ENCODE measurements at regions of chr14 and their contacts with region 1.

Region 1: DNA sequence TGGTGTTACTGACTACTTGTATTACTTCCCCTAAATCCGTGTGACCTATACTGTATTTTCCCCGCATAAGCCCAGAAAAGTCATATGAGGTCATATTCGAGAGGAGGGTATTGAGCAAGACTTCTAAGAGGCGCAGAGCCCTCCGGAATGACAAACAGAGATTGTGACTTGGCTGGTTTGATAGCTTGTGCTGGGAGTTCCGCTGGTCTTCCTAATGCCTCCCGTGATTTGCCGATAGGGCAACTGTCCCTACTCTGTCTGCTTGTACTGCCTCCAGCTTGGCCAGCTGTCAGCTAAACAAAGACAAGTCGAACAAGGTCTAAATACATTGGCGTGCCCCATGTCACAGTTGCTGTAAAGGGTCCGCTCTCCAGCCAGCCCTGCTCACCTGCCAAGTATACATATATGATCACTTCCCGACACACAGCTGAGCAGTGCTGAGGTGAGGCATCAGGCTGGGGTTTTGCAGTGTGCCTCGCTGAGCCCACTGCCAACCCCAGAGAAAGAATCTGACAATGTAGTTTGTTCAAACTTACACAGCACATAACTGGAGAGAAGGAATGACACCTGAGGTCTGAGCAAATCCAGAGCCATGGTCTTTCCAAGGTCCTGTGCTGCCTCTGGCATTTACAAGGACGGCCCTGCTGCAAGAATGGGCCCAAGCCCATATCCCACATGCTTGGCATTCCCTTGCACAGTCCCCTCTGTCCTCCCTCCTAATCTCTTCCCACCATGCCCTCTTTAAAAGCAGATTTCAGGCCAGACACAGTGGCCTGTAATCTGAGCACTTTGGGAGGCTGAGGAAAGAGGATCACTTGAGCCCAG is 23.7 kb downstream of the LGMN start:
- DNase-seq: peak in 1 of 2 donors; percentile 33
- H3K4me3 ChIP-seq: no peak overlapping the region
- H3K27ac ChIP-seq: peak overlapping the region; percentile 75 to 84
- H3K4me1 ChIP-seq: no peaks in the 10 kb centered on the region
- H3K27me3 ChIP-seq: no peaks in the 10 kb centered on the region
- CTCF ChIP-seq: no peak
- POLR2A ChIP-seq: no peak

Region 2: GRCh38 chr14:92328648-92329255 is 396.0 kb before region 1 on chr14:
- intact Hi-C with region 1: no loop called
- DNase-seq: no peak
- H3K4me3 ChIP-seq: no peak overlapping the region
- H3K27ac ChIP-seq: no peak overlapping the region
- H3K4me1 ChIP-seq: no peaks in the 10 kb centered on the region
- H3K27me3 ChIP-seq: peaks cover 0 to 26% of the 10 kb centered on the region in 2 donors
- CTCF ChIP-seq: no peak
- POLR2A ChIP-seq: no peak

Region 3: DNA sequence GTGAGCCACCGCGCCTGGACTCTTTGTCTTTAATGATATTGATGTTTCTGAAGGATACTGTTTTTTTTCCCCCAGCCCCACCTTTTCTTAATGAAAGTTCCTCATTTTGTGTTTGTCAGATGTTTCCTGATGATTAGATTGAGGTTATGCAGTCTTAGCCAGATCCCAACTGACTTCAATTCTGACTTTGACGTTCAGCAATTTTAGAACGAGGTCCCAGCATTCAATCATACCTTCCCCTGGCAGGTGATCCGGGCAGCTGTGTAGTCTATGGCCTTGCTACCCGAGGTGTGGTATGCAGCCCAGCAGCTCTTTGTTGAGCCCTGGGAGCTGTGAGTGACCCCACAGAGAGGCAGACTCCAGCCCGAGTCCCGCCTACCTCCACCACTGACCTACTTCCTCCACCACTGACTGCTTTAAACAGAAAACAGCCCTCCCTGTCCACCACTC is 59.0 kb before region 1 on chr14:
- intact Hi-C with region 1: loop called (anchors 2 kb)
- DNase-seq: no peak
- H3K4me3 ChIP-seq: no peak overlapping the region
- H3K27ac ChIP-seq: peak overlapping the region in 1 of 2 donors; percentile 38
- H3K4me1 ChIP-seq: no peaks in the 10 kb centered on the region
- H3K27me3 ChIP-seq: no peaks in the 10 kb centered on the region
- CTCF ChIP-seq: no peak
- POLR2A ChIP-seq: no peak

Measured in breast epithelium (tissue), 4 donors.